ENCODE measurements at regions of chr14 and their contacts with region 1.

Region 1: GRCh38 chr14:96424109-96424989 is 32.4 kb downstream of the AK7 start:
- DNase-seq: peak; percentile 33
- H3K4me3 Mint-ChIP-seq: peak overlapping the region; percentile 64
- H3K27ac Mint-ChIP-seq: no peak overlapping the region
- H3K4me1 Mint-ChIP-seq: peaks cover 2% of the 10 kb centered on the region
- H3K27me3 Mint-ChIP-seq: peaks cover 4% of the 10 kb centered on the region

Region 2: DNA sequence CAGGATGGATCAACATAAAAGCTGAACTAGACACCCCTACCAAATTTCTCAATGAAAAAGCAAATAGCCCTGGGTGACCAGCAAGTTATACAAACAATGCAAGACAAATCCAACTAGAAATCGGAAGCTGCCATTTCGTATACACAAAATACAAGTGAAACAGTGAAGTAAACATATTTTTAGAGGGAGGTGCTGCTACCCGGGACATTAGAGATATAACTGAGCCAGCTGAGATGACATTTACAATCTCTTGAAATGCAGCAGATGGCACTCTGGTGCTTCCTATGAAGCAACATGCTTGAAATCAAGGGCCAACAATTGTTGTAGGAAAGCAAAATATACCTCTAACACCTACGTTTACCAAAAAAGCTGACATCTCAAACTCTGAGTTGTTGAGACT is 142.9 kb before region 1 on chr14:
- CTCF ChIA-PET with region 1: interaction called, 3 read pairs
- intact Hi-C with region 1: loop called (anchors 5 kb)
- DNase-seq: no peak
- H3K4me3 Mint-ChIP-seq: no peak overlapping the region
- H3K27ac Mint-ChIP-seq: no peak overlapping the region
- H3K4me1 Mint-ChIP-seq: no peaks in the 10 kb centered on the region
- H3K27me3 Mint-ChIP-seq: no peaks in the 10 kb centered on the region

Region 3: DNA sequence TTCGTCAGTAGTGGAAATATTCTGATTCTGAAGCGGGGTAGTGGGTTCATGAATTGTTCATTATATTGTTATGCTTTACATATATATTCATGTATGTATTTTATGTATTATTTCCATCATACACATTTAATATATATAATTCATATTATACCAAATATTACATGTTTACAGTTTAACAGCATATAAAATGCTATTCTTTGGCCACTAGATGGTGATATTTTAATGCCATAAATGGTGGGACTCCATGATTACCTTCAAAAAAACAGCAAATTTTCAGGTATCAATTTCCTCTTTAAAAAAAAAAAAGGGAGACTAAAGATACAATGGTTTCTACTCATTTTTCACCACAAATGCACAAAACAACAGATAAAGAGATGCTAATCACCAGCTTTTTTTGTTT is 127.3 kb before region 1 on chr14:
- CTCF ChIA-PET with region 1: interaction called, 34 read pairs
- intact Hi-C with region 1: loop called (anchors 1 kb)
- DNase-seq: no peak
- H3K4me3 Mint-ChIP-seq: no peak overlapping the region
- H3K27ac Mint-ChIP-seq: no peak overlapping the region
- H3K4me1 Mint-ChIP-seq: no peaks in the 10 kb centered on the region
- H3K27me3 Mint-ChIP-seq: no peaks in the 10 kb centered on the region